OCI-LY7 (cell line): ENCODE measurements at regions of chr3 and their contacts with region 1.

Region 1: GRCh38 chr3:182241766-182242488 is 530.2 kb downstream of the SOX2 start:
- DNase-seq: no peak
- H3K4me3 ChIP-seq: no peak overlapping the region
- H3K27ac ChIP-seq: no peak overlapping the region
- H3K4me1 ChIP-seq: peaks cover 7% of the 10 kb centered on the region
- CTCF ChIP-seq: no peak

Region 2: GRCh38 chr3:181326637-181327223 is 915.2 kb before region 1 on chr3:
- CTCF ChIA-PET with region 1: no interaction called
- POLR2A ChIA-PET with region 1: no interaction called
- intact Hi-C with region 1: loop called (anchors 10 kb)
- DNase-seq: peak; percentile 57
- H3K4me3 ChIP-seq: no peak overlapping the region
- H3K27ac ChIP-seq: no peak overlapping the region
- H3K4me1 ChIP-seq: no peaks in the 10 kb centered on the region
- CTCF ChIP-seq: peak; percentile 94

Region 3: DNA sequence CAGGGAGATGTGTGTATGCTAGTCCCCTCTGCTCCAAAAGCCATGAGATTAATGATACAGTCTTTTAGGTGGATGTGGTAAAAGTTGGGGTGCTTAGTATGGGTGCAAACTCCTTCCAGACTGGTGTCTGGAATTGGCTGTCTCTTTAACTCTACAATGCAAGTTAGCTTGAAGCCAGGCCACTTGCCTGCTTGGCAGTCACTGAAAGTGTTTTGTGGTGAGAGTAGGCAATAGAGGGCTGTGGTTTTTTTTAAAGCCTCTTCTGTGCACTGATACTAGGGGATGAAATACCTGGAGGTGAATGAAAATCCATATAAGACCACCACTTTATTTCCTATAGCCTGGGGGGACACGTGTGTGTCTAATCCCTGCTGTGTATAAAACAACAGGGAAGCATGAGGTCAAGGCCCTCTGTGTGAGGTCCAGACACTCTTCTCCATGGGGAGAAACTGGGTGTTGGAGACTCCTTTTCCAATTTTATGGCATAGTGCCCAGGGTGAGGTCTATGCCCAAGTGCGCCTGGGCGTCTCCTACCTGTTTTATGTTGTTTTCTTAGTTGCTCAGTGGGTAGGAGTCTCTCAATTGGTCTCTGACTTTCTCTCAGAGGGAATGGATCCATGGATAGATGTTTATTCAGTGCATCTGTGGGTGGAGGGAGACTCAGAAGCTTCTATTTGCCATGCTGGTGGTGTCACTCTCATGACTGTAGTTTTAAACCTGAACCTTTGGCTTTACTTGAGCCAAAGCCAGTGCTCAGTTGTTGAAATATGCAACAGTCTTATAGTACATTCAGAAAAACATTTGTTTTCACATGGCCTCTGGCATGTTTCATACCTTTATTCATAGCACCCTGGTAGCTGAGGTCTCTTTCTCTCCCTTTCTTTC is 223.6 kb after region 1 on chr3:
- CTCF ChIA-PET with region 1: no interaction called
- POLR2A ChIA-PET with region 1: no interaction called
- intact Hi-C with region 1: no loop called
- DNase-seq: no peak
- H3K4me3 ChIP-seq: no peak overlapping the region
- H3K27ac ChIP-seq: no peak overlapping the region
- H3K4me1 ChIP-seq: no peaks in the 10 kb centered on the region
- CTCF ChIP-seq: no peak